ENCODE measurements at regions of chr17 and their contacts with region 1.

Region 1: DNA sequence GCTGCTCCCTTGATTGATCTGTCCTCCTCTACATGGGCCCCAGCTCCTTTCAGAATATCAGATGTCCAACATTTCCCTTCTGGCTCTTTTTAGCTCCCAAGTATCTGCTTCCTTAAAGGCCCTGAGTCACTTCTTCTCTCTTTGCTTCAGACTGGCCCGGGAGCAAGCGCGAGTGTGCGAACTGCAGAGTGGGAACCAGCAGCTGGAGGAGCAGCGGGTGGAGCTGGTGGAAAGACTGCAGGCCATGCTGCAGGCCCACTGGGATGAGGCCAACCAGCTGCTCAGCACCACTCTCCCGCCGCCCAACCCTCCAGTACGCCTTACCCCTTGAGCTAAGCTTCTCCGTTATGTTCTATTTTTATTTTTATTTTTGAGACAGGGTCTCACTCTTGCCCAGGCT is 12.3 kb downstream of the CNTROB start:
- DNase-seq: no peak
- H3K4me3 ChIP-seq: no peak overlapping the region
- H3K27ac ChIP-seq: no peak overlapping the region
- H3K4me1 ChIP-seq: no peaks in the 10 kb centered on the region
- H3K27me3 ChIP-seq: no peaks in the 10 kb centered on the region
- CTCF ChIP-seq: no peak
- EP300 ChIP-seq: no peak
- POLR2A ChIP-seq: no peak

Region 2: GRCh38 chr17:7704601-7705268 is 239.6 kb before region 1 on chr17 and contains the start of gene EFNB3:
- intact Hi-C with region 1: no loop called
- DNase-seq: no peak
- H3K4me3 ChIP-seq: peak within 1 kb of the TSS in 3 of 4 donors; percentile 18 to 45 (median 44)
- H3K27ac ChIP-seq: no peak within 1 kb of the TSS
- H3K4me1 ChIP-seq: peaks cover 0 to 24% (median 17%) of the 10 kb centered on the region in 4 donors
- H3K27me3 ChIP-seq: peaks cover 27 to 86% (median 67%) of the 10 kb centered on the region in 3 donors
- CTCF ChIP-seq: no peak
- EP300 ChIP-seq: no peak
- POLR2A ChIP-seq: no peak
- total RNA-seq, gene EFNB3: 0.28 to 0.71 (median 0.44) TPM

Region 3: GRCh38 chr17:7912927-7913524 is 31.3 kb before region 1 on chr17:
- intact Hi-C with region 1: no loop called
- DNase-seq: no peak
- H3K4me3 ChIP-seq: no peak overlapping the region
- H3K27ac ChIP-seq: peak overlapping the region in 2 of 4 donors; percentile 26 to 44
- H3K4me1 ChIP-seq: peaks cover 4 to 31% (median 21%) of the 10 kb centered on the region in 4 donors
- H3K27me3 ChIP-seq: no peaks in the 10 kb centered on the region
- CTCF ChIP-seq: peak; percentile 46 to 74 (median 63)
- EP300 ChIP-seq: no peak
- POLR2A ChIP-seq: no peak

Region 4: DNA sequence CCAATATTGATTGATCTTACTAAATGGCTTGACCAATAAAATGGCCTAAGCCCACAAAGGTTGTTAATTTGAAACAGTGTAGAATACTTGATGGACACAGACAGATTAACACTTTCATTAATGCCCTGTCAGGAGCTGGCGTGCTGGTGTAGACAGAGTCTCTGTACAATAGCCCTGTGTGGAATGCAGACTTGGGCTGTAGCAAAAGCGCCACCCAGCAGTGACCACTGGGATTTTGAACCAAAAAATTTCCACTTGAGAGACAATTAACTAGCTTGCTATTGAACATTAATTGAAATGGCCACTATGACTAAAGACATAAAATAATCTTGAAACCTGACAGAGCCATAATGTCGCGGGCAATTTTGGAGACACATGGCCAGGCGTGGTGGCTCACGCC is 38.3 kb after region 1 on chr17:
- intact Hi-C with region 1: loop called (anchors 5 kb)
- DNase-seq: peak; percentile 35
- H3K4me3 ChIP-seq: no peak overlapping the region
- H3K27ac ChIP-seq: no peak overlapping the region
- H3K4me1 ChIP-seq: no peaks in the 10 kb centered on the region
- H3K27me3 ChIP-seq: peaks cover 0 to 3% (median 0%) of the 10 kb centered on the region in 3 donors
- CTCF ChIP-seq: no peak
- EP300 ChIP-seq: no peak
- POLR2A ChIP-seq: no peak

Region 5: GRCh38 chr17:8223357-8224126 is 279.2 kb after region 1 on chr17:
- intact Hi-C with region 1: no loop called
- DNase-seq: peak; percentile 85
- H3K4me3 ChIP-seq: peak overlapping the region; percentile 45 to 71 (median 66)
- H3K27ac ChIP-seq: peak overlapping the region; percentile 95 to 98 (median 96)
- H3K4me1 ChIP-seq: peaks cover 0 to 42% (median 23%) of the 10 kb centered on the region in 4 donors
- H3K27me3 ChIP-seq: no peaks in the 10 kb centered on the region
- CTCF ChIP-seq: no peak
- EP300 ChIP-seq: no peak
- POLR2A ChIP-seq: no peak

Measured in sigmoid colon (tissue), 7 donors.